ENCODE measurements at regions of chr20 and their contacts with region 1.

Region 1: DNA sequence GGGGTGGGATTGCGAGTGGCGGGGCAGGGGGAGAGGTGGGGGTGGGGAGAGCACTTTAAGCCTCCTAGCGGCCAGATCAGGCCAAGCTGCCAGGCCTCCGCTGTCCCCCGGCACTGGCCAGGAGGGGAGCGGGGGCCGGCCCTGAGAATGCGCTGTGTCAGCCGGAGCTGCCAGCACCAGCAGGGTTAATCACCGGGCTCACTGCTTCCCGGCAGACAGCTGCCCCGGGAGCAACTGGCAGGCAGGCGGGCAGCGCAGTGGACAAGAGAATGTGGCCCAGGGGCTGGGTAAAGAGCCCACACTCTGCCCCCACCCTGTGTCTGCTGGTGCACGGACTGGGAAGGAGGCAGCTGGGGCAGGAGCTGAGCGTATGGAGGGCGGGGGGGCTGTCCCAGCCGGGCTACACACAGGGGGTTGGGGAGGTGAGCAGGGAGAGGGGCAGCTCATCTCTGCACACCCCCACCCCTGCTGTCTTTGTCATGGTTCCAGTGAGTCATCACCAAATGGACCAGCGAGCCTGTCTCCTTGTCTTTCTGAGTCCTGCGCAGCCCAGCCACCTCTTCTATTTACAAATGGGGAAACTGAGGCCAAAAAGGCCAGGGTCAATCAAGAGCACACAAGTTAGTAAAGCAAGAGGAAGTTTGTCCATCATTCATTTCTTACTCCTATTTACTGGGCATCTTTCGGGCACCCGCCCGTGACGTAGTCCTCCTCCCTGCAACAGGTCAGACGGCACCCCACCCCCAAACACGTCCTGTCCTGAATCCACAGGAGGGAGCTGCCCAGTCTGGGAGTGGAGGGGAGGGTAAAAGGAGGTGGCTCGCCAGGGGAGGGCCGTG is 2.1 kb upstream of the LAMA5 start:
- H3K4me3 ChIP-seq: no peak overlapping the region
- H3K27ac ChIP-seq: no peak overlapping the region; the same call in 1 of the 2 replicates
- H3K4me1 ChIP-seq: peaks cover 34% of the 10 kb centered on the region
- CTCF ChIP-seq: 0 out of 2 replicates have a peak, but pooled peaks have one; percentile 18

Region 2: GRCh38 chr20:62302341-62303058 is 66.7 kb before region 1 on chr20 and contains the start of gene ADRM1:
- CTCF ChIA-PET with region 1: interaction called, 5 read pairs
- POLR2A ChIA-PET with region 1: interaction called, 15 read pairs
- H3K4me3 ChIP-seq: peak within 1 kb of the TSS; percentile 92
- H3K27ac ChIP-seq: peak within 1 kb of the TSS; percentile 91
- H3K4me1 ChIP-seq: peaks cover 8% of the 10 kb centered on the region
- CTCF ChIP-seq: peak; percentile 98

Region 3: GRCh38 chr20:62350093-62350628 is 19.0 kb before region 1 on chr20:
- CTCF ChIA-PET with region 1: interaction called, 7 read pairs
- POLR2A ChIA-PET with region 1: interaction called, 17 read pairs
- H3K4me3 ChIP-seq: no peak overlapping the region
- H3K27ac ChIP-seq: no peak overlapping the region
- H3K4me1 ChIP-seq: peaks cover 5% of the 10 kb centered on the region
- CTCF ChIP-seq: no peak

Region 4: DNA sequence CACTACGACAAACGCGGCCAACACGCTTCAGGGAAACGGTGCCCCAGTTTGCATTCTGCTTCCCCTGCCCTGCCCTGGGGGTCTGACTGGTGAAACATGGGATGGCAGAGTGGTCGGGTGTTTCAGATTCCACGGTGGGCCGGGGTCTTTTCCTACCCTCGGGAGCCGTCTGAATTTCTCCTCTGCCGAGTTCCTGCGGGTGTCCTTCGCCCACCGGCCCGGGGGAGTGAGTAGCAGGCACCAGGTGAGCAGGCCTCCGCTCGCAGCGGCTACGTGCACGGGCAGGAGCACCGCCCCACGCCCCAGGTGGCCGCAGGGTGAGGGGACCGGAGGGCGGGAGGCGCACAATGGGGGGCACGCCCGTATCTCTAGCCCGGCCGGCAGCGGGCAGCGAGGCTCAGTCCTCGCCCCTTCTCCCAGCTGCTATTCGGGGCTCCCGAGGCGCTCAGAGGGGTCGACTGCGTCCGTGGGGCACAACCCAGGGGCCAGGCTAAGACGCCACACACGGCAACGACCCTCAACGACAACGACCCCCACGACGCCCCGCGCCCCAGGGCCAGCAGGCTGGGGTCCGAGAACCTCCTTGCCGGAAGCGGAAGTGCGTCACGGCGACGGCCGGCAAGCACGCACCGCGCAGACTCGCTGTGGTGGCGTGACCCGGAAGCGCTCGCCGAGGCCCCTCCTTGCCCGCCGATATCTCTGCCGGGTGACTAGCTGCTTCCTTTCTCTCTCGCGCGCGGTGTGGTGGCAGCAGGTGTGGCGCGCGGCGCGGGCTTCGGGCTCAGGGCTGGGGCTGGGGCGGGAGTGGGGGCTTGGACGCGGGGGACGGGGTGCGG is 17.4 kb after region 1 on chr20 and contains the start of gene RPS21:
- CTCF ChIA-PET with region 1: interaction called, 25 read pairs
- POLR2A ChIA-PET with region 1: interaction called, 24 read pairs
- H3K4me3 ChIP-seq: peak within 1 kb of the TSS; percentile 93
- H3K27ac ChIP-seq: peak within 1 kb of the TSS; percentile 85
- H3K4me1 ChIP-seq: peaks cover 5% of the 10 kb centered on the region; the same call in 1 of the 2 replicates
- CTCF ChIP-seq: peak; percentile 16; the same call in 1 of the 2 replicates